ENCODE measurements at regions of chr17 and their contacts with region 1.

Region 1: DNA sequence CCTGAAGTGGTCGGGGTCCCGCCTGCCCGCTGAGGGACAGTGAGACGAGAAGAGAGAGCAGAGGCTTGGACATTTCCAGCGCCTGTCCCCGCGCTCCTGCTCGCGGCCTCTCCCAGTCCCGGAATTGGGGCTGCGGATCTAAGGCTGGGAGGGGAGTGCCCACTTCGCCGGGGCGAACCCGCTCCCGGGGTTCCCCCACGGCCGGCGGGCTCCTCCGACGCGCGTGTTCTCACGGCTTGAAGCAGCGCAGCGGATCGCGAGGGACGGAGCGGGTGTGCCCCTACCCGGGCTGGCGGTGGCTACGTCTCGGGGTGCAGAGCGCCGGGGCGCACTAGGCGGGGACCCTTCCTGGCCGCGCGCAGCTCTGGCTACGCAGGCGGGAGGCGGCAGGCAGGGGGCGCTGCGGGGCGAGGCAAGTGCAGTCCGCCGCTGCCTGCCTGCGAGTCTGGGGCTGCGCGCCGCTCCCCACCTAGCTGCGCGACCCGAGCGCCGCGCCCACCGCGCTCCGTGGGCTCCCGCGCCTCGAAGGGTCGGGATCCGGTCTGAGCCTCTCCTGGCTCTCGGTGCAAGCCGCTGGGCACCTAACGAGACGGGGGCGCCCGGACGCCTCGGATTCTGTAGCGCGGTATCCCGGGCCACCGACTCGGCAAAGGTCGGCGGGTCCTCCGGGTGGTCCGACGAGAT is 1.2 kb downstream of the NGFR start:
- DNase-seq: peak in 1 of 2 experiments; percentile 98
- H3K4me3 ChIP-seq: peak overlapping the region; percentile 57 to 79 (median 72)
- H3K27ac ChIP-seq: no peak overlapping the region
- H3K4me1 ChIP-seq: peaks cover 3 to 11% (median 7%) of the 10 kb centered on the region in 4 experiments
- H3K27me3 ChIP-seq: peaks cover 12 to 47% (median 38%) of the 10 kb centered on the region in 4 experiments
- CTCF ChIP-seq: peak; percentile 81 to 94 (median 85)
- EP300 ChIP-seq: peak in 1 of 2 experiments; percentile 20; a peak in 1 of 3 replicates
- POLR2A ChIP-seq: no peak
- RAD21 ChIP-seq: peak; percentile 42 to 67

Region 2: DNA sequence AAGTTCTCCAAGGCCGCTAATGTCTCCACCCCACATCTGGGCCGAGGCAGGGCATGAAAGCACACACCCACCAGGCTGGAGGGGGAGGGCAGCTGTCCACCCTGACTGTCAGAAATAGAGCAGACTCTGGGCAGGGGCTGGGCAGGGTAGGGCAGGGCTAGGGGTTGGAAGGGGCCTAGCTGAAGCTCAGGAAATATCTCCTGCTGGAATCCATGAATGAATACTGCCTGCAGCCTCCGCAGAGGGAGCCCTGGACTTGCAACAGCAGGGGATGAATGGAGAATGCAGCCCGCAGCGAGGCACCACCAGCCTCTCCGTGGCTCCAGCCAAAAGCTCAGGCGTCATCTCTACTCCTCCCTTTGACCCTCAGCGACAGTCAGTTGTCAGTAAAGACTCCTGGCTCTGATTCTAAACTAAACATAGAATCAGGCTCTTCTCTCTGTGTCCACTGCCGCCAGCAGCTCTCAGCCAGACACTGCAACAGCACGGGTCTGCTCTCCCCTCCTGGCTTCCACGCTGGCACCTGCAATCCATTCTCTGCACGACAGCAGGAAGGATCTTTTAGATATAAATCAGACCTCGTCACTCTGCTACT is 25.1 kb before region 1 on chr17:
- CTCF ChIA-PET with region 1: interaction called, 18 read pairs
- POLR2A ChIA-PET with region 1: no interaction called
- DNase-seq: no peak
- H3K4me3 ChIP-seq: peak overlapping the region in 1 of 4 experiments; percentile 73; a peak in 3 of 8 replicates
- H3K27ac ChIP-seq: no peak overlapping the region
- H3K4me1 ChIP-seq: peaks cover 7 to 16% (median 12%) of the 10 kb centered on the region in 4 experiments
- H3K27me3 ChIP-seq: peaks cover 3 to 35% (median 34%) of the 10 kb centered on the region in 4 experiments
- CTCF ChIP-seq: peak in 1 of 3 experiments; percentile 2; a peak in 1 of 4 replicates
- EP300 ChIP-seq: no peak
- POLR2A ChIP-seq: no peak
- RAD21 ChIP-seq: no peak; a peak in 1 of 4 replicates

Region 3: GRCh38 chr17:49508061-49508865 is 11.9 kb after region 1 on chr17:
- CTCF ChIA-PET with region 1: interaction called, 210 read pairs
- POLR2A ChIA-PET with region 1: interaction called, 11 read pairs
- DNase-seq: peak; percentile 83 to 97
- H3K4me3 ChIP-seq: peak overlapping the region; percentile 22 to 51 (median 34); a peak in 5 of 8 replicates
- H3K27ac ChIP-seq: peak overlapping the region; percentile 58; the same call in 1 of the 2 replicates
- H3K4me1 ChIP-seq: peaks cover 6 to 40% (median 22%) of the 10 kb centered on the region in 4 experiments
- H3K27me3 ChIP-seq: peaks cover 0 to 2% (median 0%) of the 10 kb centered on the region in 4 experiments; a peak in 1 of 7 replicates
- CTCF ChIP-seq: no peak
- EP300 ChIP-seq: no peak
- POLR2A ChIP-seq: peak in 1 of 2 experiments; percentile 48; a peak in 1 of 3 replicates
- RAD21 ChIP-seq: no peak

Region 4: GRCh38 chr17:49523706-49524472 is 27.6 kb after region 1 on chr17:
- CTCF ChIA-PET with region 1: interaction called, 15 read pairs
- POLR2A ChIA-PET with region 1: no interaction called
- DNase-seq: peak in 1 of 2 experiments; percentile 45
- H3K4me3 ChIP-seq: no peak overlapping the region
- H3K27ac ChIP-seq: no peak overlapping the region
- H3K4me1 ChIP-seq: peaks cover 0 to 6% (median 0%) of the 10 kb centered on the region in 4 experiments; a peak in 3 of 7 replicates
- H3K27me3 ChIP-seq: no peaks in the 10 kb centered on the region
- CTCF ChIP-seq: no peak
- EP300 ChIP-seq: no peak
- POLR2A ChIP-seq: no peak
- RAD21 ChIP-seq: no peak

Region 5: DNA sequence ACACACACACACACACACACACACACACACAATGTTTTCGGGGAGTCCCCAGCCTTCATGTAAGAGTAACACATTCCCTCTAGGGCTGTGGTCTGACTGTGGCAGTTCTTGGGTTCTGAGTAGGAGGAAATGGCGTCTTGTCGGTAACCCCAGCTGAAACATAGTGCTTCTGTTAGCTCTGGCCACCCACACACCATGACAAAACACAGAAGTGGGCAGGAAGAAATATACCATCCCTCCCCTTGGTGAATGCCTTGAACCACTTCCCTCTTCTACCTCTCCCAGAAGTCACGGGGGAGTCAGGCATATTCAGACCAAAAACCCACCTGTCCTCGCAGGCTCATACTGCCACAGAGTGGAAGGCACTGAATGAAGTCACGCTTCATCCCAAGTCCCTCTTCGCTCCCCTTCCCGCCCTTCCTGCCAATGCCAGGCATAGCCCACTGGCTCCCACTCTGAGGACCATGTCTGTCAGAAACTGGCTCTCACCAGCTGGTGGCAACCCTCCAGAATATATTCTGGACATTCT is 200.0 kb after region 1 on chr17:
- CTCF ChIA-PET with region 1: no interaction called
- POLR2A ChIA-PET with region 1: no interaction called
- DNase-seq: no peak
- H3K4me3 ChIP-seq: no peak overlapping the region
- H3K27ac ChIP-seq: no peak overlapping the region
- H3K4me1 ChIP-seq: peaks cover 0 to 2% (median under 1%) of the 10 kb centered on the region in 4 experiments; a peak in 4 of 7 replicates
- H3K27me3 ChIP-seq: no peaks in the 10 kb centered on the region; a peak in 1 of 7 replicates
- CTCF ChIP-seq: no peak
- EP300 ChIP-seq: no peak
- POLR2A ChIP-seq: no peak
- RAD21 ChIP-seq: no peak